Activated B cell treated with CpG ODN at 0.5 μM for 24 hours (primary cell): ENCODE measurements at regions of chr22 and their contacts with region 1.

Region 1: DNA sequence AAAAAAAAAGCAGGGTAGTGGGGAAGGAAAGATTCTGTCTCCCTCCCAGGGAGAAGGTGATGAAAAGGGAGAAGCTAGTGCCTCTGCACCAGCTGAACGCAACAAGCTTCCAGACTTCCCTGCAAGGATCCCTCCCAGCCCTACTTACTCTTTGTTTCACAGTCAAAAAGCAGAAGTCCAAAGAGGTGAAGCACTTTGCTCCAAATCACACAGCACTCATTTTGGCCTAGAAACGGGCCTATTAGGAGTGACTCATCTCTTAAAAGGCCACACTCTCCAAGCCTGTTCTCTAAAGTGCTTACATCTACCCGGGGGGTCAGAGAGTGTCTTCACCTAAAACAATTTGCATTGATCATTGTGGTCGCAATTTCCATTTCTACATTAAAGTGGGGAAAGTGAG is 17.7 kb upstream of the GRK3 start:
- DNase-seq: no peak
- ATAC-seq: peak; percentile 55
- H3K4me3 Mint-ChIP-seq: no peak overlapping the region
- H3K27ac Mint-ChIP-seq: no peak overlapping the region
- H3K4me1 Mint-ChIP-seq: peaks cover 46% of the 10 kb centered on the region
- H3K27me3 Mint-ChIP-seq: no peaks in the 10 kb centered on the region
- CTCF ChIP-seq: no peak

Region 2: GRCh38 chr22:25623310-25623734 is 76.6 kb after region 1 on chr22:
- CTCF ChIA-PET with region 1: interaction called, 16 read pairs
- POLR2A ChIA-PET with region 1: interaction called, 3 read pairs
- intact Hi-C with region 1: loop called (anchors 1 kb)
- DNase-seq: no peak
- ATAC-seq: peak; percentile 57
- H3K4me3 Mint-ChIP-seq: no peak overlapping the region
- H3K27ac Mint-ChIP-seq: peak overlapping the region; percentile 68
- H3K4me1 Mint-ChIP-seq: peaks cover 55% of the 10 kb centered on the region
- H3K27me3 Mint-ChIP-seq: no peaks in the 10 kb centered on the region
- CTCF ChIP-seq: no peak

Region 3: GRCh38 chr22:25702040-25702439 is 155.3 kb after region 1 on chr22:
- CTCF ChIA-PET with region 1: interaction called, 56 read pairs
- POLR2A ChIA-PET with region 1: interaction called, 4 read pairs
- intact Hi-C with region 1: loop called (anchors 1 kb)
- DNase-seq: no peak
- ATAC-seq: no peak
- H3K4me3 Mint-ChIP-seq: no peak overlapping the region
- H3K27ac Mint-ChIP-seq: no peak overlapping the region
- H3K4me1 Mint-ChIP-seq: peaks cover 9% of the 10 kb centered on the region
- H3K27me3 Mint-ChIP-seq: no peaks in the 10 kb centered on the region
- CTCF ChIP-seq: no peak

Region 4: DNA sequence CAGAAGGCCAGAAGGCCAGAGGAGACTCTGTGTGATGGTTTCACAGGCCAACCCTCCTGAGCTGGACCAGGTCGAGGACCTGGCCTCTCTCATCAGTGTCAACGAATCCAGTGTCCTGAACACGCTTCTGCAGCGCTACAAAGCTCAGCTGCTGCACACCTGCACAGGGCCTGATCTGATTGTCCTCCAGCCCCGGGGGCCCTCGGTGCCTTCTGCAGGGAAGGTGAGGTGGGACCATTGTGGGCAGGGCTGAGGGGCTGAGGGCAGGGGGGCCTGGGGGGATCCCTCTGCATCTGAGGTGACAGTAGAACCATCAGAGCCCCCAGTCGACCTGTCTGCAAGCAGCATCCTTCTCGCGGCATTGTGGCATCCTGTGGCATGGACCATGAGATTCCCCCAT is 225.5 kb after region 1 on chr22:
- CTCF ChIA-PET with region 1: interaction called, 19 read pairs
- POLR2A ChIA-PET with region 1: no interaction called
- intact Hi-C with region 1: loop called (anchors 1 kb)
- DNase-seq: no peak
- ATAC-seq: no peak
- H3K4me3 Mint-ChIP-seq: no peak overlapping the region
- H3K27ac Mint-ChIP-seq: no peak overlapping the region
- H3K4me1 Mint-ChIP-seq: peaks cover 12% of the 10 kb centered on the region
- H3K27me3 Mint-ChIP-seq: peaks cover 2% of the 10 kb centered on the region
- CTCF ChIP-seq: no peak